Tibial artery (tissue), 4 donors: ENCODE measurements at regions of chr9 and their contacts with region 1.

Region 1: GRCh38 chr9:94783102-94783664 is 56.7 kb downstream of the AOPEP start:
- DNase-seq: peak; percentile 81 to 89
- H3K4me3 ChIP-seq: no peak overlapping the region
- H3K27ac ChIP-seq: peak overlapping the region; percentile 62 to 74
- H3K4me1 ChIP-seq: peaks cover 0 to 32% (median 19%) of the 10 kb centered on the region in 4 donors
- H3K27me3 ChIP-seq: no peaks in the 10 kb centered on the region
- CTCF ChIP-seq: peak; percentile 65 to 66

Region 2: DNA sequence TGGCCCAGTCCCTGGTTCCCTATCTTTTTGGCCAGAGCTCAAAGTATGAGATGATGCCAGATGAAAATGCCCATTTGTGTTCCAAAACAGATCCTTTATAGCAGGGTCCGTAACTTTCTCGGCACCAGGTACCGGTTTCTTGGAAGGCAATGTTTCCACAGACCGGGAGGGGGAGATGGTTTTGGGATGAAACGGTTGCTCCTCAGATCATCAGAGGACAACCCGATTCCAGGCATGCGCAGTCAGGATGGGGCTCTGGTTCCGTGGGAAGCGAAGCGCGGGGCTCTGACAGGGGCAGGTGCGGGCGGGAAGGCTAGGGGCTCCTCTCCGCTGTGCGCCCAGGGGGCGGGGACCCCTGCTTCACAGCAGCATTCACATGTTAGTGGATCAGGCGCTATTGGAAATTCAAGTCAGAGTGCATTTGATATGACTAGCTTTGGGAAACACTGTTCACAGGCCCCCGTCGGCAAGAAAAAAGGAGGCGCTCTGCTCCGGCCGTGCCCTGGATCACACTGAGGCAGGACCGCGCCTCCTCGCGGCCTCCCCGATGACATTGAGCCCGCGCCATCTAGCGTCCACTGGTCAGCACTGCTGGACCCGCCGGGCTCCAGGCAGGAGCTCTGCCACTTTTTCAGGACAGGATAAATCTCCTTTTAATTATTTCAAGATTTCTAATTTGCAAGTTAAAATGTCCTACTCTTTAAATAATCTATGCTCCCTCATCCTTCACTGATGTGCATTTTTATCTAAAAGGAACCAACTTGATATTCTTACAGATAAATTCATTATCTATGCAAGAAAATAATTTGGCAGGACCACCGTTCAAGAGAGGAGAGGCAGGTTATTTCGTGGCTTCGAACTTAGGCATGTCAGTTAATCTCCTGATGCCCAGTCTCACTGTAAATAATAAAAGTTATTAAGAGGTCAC is 344.3 kb after region 1 on chr9:
- intact Hi-C with region 1: loop called (anchors 5 kb)
- DNase-seq: peak; percentile 92
- H3K4me3 ChIP-seq: peak overlapping the region; percentile 43 to 51
- H3K27ac ChIP-seq: peak overlapping the region; percentile 63 to 70
- H3K4me1 ChIP-seq: peaks cover 0 to 38% (median 14%) of the 10 kb centered on the region in 4 donors
- H3K27me3 ChIP-seq: no peaks in the 10 kb centered on the region
- CTCF ChIP-seq: peak; percentile 95 to 98